WTC11 (cell line): ENCODE measurements at regions of chr17 and their contacts with region 1.

Region 1: DNA sequence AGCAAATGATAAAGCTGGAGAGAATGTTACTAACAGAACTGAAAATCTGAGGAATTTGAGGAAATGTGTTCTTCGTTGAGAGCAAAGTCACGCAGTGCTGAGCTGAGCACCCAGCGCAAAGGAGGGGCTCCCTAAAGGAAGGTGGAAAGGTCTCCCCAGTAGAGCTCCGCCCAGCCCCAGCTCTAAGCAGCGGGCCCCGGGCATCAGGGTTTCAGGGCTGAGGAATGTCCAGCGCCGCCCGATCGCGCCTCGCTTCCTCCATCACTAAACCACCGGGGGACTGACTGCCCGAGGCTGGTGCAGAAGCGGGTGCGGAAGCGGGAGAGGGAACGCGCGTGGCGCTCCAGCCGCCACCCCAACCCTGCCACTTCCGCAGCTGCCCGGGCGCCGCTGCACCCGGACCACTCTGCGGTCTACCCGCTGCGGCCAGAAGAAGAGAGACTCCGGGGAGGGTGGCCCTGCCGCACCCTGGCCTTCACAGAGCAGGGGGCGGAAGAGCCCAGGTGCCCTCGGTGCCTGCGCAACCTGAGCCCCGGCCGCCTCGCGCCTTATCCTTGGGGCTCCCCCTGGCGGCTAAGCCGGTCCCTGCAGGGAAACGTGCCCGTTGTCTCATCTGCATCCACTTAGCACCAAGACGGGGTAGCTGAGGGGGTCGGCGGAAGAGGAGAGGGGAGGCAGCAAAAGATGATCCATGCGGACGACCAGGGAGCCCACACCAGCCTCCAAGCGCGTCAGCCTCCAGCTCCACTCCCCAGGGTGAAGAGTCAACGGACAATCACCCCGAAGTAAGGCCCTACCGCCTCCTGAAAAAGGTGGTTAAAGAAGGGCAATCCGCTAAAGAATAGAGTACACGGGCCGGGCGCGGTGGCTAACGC is 12.4 kb upstream of the GUCY2D start:
- DNase-seq: peak; percentile 97
- ATAC-seq: peak; percentile 91
- H3K4me3 Mint-ChIP-seq: peak overlapping the region; percentile 71
- H3K27ac Mint-ChIP-seq: no peak overlapping the region
- H3K4me1 Mint-ChIP-seq: peaks cover 12% of the 10 kb centered on the region
- H3K27me3 Mint-ChIP-seq: peaks cover 37% of the 10 kb centered on the region
- CTCF ChIP-seq: peak; percentile 90

Region 2: GRCh38 chr17:7834962-7835813 is 154.8 kb before region 1 on chr17:
- CTCF ChIA-PET with region 1: interaction called, 14 read pairs
- POLR2A ChIA-PET with region 1: no interaction called
- DNase-seq: peak; percentile 98
- ATAC-seq: peak; percentile 60
- H3K4me3 Mint-ChIP-seq: peak overlapping the region; percentile 93
- H3K27ac Mint-ChIP-seq: peak overlapping the region; percentile 86
- H3K4me1 Mint-ChIP-seq: peaks cover 34% of the 10 kb centered on the region
- H3K27me3 Mint-ChIP-seq: peaks cover 54% of the 10 kb centered on the region
- CTCF ChIP-seq: peak; percentile 45

Region 3: DNA sequence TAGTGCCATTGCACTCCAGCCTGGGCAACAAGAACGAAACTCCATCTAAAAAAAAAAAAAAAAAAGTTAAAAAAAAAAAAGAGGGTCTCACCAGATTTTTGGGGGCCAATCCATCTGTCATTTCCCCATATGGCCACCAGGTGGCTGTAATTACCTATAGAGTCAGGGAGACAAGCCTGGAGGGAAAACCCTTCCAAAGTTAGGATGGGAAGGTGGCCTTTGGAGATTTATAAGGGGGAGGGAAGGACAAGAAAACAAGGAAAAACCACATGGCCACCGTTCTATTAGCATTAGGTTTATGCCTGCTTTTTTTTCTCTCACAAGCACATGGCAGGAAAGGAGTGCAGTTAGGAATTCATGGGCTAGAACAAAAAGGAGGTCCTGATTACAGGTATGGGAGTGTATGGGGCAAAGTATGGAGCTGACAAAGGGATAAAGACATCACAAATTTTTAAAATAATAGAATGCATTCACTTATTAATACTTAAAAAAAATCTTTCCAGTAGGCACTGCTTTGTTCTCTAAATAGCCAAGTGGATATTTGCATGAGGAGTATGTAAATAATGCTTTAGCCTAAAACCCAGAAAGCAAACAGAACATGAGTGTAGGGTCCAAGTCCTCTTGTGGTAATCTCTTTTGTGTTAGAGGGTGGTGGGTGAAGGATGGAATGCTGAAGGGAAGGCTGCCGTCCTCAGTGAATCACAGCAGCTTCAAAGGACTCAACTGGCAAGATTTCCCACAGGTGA is 127.2 kb before region 1 on chr17:
- CTCF ChIA-PET with region 1: interaction called, 22 read pairs
- POLR2A ChIA-PET with region 1: no interaction called
- DNase-seq: peak; percentile 77
- ATAC-seq: no peak
- H3K4me3 Mint-ChIP-seq: no peak overlapping the region
- H3K27ac Mint-ChIP-seq: peak overlapping the region; percentile 17; the same call in 1 of the 2 replicates
- H3K4me1 Mint-ChIP-seq: peaks cover 11% of the 10 kb centered on the region
- H3K27me3 Mint-ChIP-seq: no peaks in the 10 kb centered on the region
- CTCF ChIP-seq: peak; percentile 64; the same call in 1 of the 2 replicates

Region 4: GRCh38 chr17:7972131-7972785 is 17.8 kb before region 1 on chr17:
- CTCF ChIA-PET with region 1: interaction called, 38 read pairs
- POLR2A ChIA-PET with region 1: no interaction called
- DNase-seq: no peak
- ATAC-seq: no peak
- H3K4me3 Mint-ChIP-seq: no peak overlapping the region
- H3K27ac Mint-ChIP-seq: no peak overlapping the region
- H3K4me1 Mint-ChIP-seq: no peaks in the 10 kb centered on the region
- H3K27me3 Mint-ChIP-seq: peaks cover 28% of the 10 kb centered on the region
- CTCF ChIP-seq: no peak

Region 5: GRCh38 chr17:8022360-8023003 is 32.5 kb after region 1 on chr17:
- CTCF ChIA-PET with region 1: interaction called, 49 read pairs
- POLR2A ChIA-PET with region 1: no interaction called
- DNase-seq: no peak
- ATAC-seq: no peak
- H3K4me3 Mint-ChIP-seq: no peak overlapping the region
- H3K27ac Mint-ChIP-seq: no peak overlapping the region
- H3K4me1 Mint-ChIP-seq: peaks cover 5% of the 10 kb centered on the region
- H3K27me3 Mint-ChIP-seq: peaks cover 3% of the 10 kb centered on the region
- CTCF ChIP-seq: no peak

Region 6: GRCh38 chr17:8073627-8074484 is 83.8 kb after region 1 on chr17:
- CTCF ChIA-PET with region 1: interaction called, 12 read pairs
- POLR2A ChIA-PET with region 1: no interaction called
- DNase-seq: peak; percentile 92
- ATAC-seq: peak; percentile 82
- H3K4me3 Mint-ChIP-seq: peak overlapping the region; percentile 76
- H3K27ac Mint-ChIP-seq: no peak overlapping the region
- H3K4me1 Mint-ChIP-seq: peaks cover 23% of the 10 kb centered on the region
- H3K27me3 Mint-ChIP-seq: peaks cover 96% of the 10 kb centered on the region
- CTCF ChIP-seq: peak; percentile 89

Region 7: GRCh38 chr17:8126531-8127066 is 136.6 kb after region 1 on chr17:
- CTCF ChIA-PET with region 1: no interaction called
- POLR2A ChIA-PET with region 1: no interaction called
- DNase-seq: peak; percentile 60
- ATAC-seq: peak; percentile 7
- H3K4me3 Mint-ChIP-seq: peak overlapping the region; percentile 85
- H3K27ac Mint-ChIP-seq: peak overlapping the region; percentile 42; the same call in 1 of the 2 replicates
- H3K4me1 Mint-ChIP-seq: peaks cover 20% of the 10 kb centered on the region
- H3K27me3 Mint-ChIP-seq: peaks cover 78% of the 10 kb centered on the region
- CTCF ChIP-seq: no peak